Gastrocnemius medialis (tissue), 4 donors: ENCODE measurements at regions of chr6 and their contacts with region 1.

Region 1: DNA sequence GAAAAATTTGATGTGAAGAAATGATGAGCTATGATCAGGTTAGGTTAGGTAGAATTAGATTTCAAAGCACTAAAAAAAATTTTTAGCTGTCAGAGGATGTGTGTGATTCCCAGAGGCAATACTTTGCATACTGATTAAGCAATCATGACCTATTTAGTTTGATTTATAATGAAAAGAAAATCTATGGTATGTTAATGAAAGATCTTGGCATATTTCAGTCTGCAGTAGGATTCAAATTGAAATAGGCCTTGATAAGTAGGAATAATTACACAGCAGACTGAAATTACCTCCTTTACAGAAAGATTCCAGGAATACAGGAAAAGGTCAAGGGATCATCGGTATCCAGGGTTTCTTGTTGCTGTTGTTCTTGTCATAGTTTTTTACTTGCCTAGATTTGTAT is 69.3 kb downstream of the HDDC2 start:
- DNase-seq: no peak
- ATAC-seq: no peak
- H3K4me3 ChIP-seq: no peak overlapping the region
- H3K27ac ChIP-seq: peak overlapping the region; percentile 63 to 82 (median 76)
- H3K4me1 ChIP-seq: peaks cover 64 to 66% of the 10 kb centered on the region in 2 donors
- H3K27me3 ChIP-seq: no peaks in the 10 kb centered on the region
- CTCF ChIP-seq: no peak
- POLR2A ChIP-seq: no peak

Region 2: DNA sequence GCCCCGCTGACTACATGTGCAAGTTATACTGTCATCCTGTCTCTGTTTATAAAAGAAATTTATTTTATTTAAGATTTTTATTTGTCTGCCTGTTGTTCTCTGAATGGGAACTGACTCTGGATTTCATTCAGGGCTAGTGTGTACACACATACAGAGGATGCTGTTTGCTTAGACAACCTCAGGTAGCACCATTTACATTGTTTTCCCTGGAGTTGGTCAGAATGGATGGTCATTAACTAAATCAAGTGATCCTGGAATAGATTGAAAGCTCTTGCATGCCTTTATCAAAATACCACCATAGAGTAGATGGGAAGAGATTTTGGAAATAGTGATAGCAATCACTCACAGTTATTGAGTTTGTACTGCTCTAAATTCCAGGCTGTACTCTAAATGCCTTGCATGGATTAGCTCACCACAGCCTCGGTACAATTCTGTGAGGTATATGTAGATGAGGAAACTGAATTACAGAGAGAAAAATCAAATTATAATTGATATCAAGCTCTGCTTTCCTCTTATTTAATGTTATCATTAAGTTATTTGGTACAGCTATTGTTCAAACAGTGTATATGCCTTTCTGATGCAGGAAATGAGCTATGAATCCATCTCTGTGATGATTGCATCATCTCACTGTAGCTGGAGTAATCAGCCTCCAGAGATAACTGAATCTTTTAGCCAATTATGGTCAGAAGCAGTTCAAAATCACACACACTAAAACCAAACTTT is 218.4 kb before region 1 on chr6:
- in situ Hi-C with region 1: no loop called
- intact Hi-C with region 1: no loop called
- DNase-seq: no peak
- ATAC-seq: no peak
- H3K4me3 ChIP-seq: no peak overlapping the region
- H3K27ac ChIP-seq: no peak overlapping the region
- H3K4me1 ChIP-seq: peaks cover 10 to 15% of the 10 kb centered on the region in 2 donors
- H3K27me3 ChIP-seq: no peaks in the 10 kb centered on the region
- CTCF ChIP-seq: no peak
- POLR2A ChIP-seq: no peak

Region 3: DNA sequence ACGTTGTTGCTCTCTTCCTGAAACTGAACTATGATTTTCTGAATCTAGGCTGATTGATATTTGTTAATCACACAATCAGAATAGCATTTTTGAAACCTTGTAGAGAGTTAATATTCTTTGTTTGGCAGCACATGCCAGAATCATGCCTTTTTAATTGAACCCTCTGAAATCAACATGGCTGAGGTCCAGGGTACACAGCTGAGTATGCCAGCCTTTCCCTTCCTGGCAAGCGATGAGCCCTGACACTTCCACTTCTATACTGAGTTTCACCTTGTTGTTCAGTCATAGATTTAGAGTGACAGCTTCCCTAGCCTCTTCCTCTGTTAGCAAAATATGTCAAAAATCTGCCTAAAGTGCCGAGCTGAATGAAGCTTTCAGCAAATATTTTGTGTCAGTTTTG is 62.4 kb after region 1 on chr6:
- in situ Hi-C with region 1: no loop called
- intact Hi-C with region 1: loop called (anchors 5 kb)
- DNase-seq: no peak
- ATAC-seq: peak; percentile 64 to 72
- H3K4me3 ChIP-seq: no peak overlapping the region
- H3K27ac ChIP-seq: peak overlapping the region; percentile 32 to 66 (median 44)
- H3K4me1 ChIP-seq: peaks cover 34 to 51% of the 10 kb centered on the region in 2 donors
- H3K27me3 ChIP-seq: no peaks in the 10 kb centered on the region
- CTCF ChIP-seq: no peak
- POLR2A ChIP-seq: no peak